ENCODE measurements at regions of chr15 and their contacts with region 1.

Region 1: GRCh38 chr15:42385206-42385979 is 26.1 kb downstream of the CAPN3 start:
- DNase-seq: peak; percentile 77
- ATAC-seq: peak; percentile 85
- H3K4me3 Mint-ChIP-seq: no peak overlapping the region
- H3K27ac Mint-ChIP-seq: no peak overlapping the region; the same call in 1 of the 2 replicates
- H3K4me1 Mint-ChIP-seq: peaks cover 29% of the 10 kb centered on the region
- H3K27me3 Mint-ChIP-seq: peaks cover 18% of the 10 kb centered on the region
- CTCF ChIP-seq: peak; percentile 51; the same call in 1 of the 2 replicates

Region 2: GRCh38 chr15:41989259-41989933 is 396.0 kb before region 1 on chr15:
- CTCF ChIA-PET with region 1: interaction called, 10 read pairs
- POLR2A ChIA-PET with region 1: no interaction called
- DNase-seq: peak; percentile 98
- ATAC-seq: peak; percentile 95
- H3K4me3 Mint-ChIP-seq: no peak overlapping the region
- H3K27ac Mint-ChIP-seq: no peak overlapping the region
- H3K4me1 Mint-ChIP-seq: peaks cover 6% of the 10 kb centered on the region
- H3K27me3 Mint-ChIP-seq: no peaks in the 10 kb centered on the region
- CTCF ChIP-seq: peak; percentile 97

Region 3: GRCh38 chr15:42156243-42156922 is 229.0 kb before region 1 on chr15 and contains the start of gene PLA2G4F:
- CTCF ChIA-PET with region 1: interaction called, 14 read pairs
- POLR2A ChIA-PET with region 1: no interaction called
- DNase-seq: no peak
- ATAC-seq: peak; percentile 58
- H3K4me3 Mint-ChIP-seq: no peak within 1 kb of the TSS
- H3K27ac Mint-ChIP-seq: peak within 1 kb of the TSS; percentile 46; the same call in 1 of the 2 replicates
- H3K4me1 Mint-ChIP-seq: peaks cover 7% of the 10 kb centered on the region
- H3K27me3 Mint-ChIP-seq: no peaks in the 10 kb centered on the region
- CTCF ChIP-seq: no peak
- total RNA-seq, gene PLA2G4F: 0.11 to 0.18 TPM (median 0.16 TPM) in 3 replicates

Region 4: DNA sequence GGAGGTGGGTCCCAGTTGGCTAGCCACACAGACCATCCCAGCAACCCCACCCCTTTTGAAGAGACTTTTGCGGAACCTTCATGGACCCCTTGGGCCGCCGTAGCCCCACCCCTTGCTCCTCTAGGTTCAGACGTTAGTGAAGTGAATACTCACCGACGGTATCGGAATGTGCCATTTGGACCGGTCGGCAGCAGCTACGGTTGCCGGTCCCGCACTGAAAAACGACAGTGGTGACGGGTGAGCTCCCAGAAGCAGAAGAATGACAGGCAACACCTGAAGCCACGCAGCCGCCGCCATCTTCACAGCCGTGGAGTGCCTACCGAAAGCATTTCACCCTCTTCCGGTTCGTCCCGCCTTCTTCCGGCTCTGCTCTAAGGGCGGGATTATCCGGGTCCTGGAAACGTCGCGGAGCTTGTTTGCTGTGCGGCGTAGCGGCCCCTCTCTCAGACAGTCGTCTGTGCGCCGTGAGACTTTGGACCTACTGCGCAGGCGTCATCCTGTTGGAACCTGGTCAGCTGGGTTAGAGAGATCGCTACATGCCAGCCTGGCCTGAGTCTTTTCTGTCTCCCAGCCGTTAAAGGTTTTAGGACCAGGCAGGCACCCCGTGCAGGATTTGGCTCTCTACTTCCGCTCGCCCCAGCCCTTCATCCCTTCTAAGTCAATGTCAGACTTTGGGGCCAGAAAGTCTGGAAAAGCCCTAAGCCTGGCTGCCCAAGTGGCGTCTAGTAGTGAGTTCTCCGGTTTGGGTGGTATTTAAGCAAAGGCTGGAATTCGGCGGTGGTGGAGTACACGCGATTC is 112.1 kb before region 1 on chr15 and contains the starts of genes GANC and TMEM87A:
- CTCF ChIA-PET with region 1: interaction called, 13 read pairs
- POLR2A ChIA-PET with region 1: interaction called, 7 read pairs
- DNase-seq: peak; percentile 96
- ATAC-seq: peak; percentile 96
- H3K4me3 Mint-ChIP-seq: peak within 1 kb of the TSS; percentile 97
- H3K27ac Mint-ChIP-seq: peak within 1 kb of the TSS; percentile 100
- H3K4me1 Mint-ChIP-seq: peaks cover 32% of the 10 kb centered on the region
- H3K27me3 Mint-ChIP-seq: no peaks in the 10 kb centered on the region
- CTCF ChIP-seq: no peak
- total RNA-seq, gene GANC: 18.5 to 20.5 TPM (median 19.6 TPM) in 3 replicates
- total RNA-seq, gene TMEM87A: 28.6 to 32.4 TPM (median 30.5 TPM) in 3 replicates

Region 5: GRCh38 chr15:42338500-42338899 is 46.9 kb before region 1 on chr15:
- CTCF ChIA-PET with region 1: interaction called, 10 read pairs
- POLR2A ChIA-PET with region 1: no interaction called
- DNase-seq: no peak
- ATAC-seq: no peak
- H3K4me3 Mint-ChIP-seq: no peak overlapping the region
- H3K27ac Mint-ChIP-seq: peak overlapping the region; percentile 86
- H3K4me1 Mint-ChIP-seq: no peaks in the 10 kb centered on the region
- H3K27me3 Mint-ChIP-seq: no peaks in the 10 kb centered on the region
- CTCF ChIP-seq: no peak

Region 6: DNA sequence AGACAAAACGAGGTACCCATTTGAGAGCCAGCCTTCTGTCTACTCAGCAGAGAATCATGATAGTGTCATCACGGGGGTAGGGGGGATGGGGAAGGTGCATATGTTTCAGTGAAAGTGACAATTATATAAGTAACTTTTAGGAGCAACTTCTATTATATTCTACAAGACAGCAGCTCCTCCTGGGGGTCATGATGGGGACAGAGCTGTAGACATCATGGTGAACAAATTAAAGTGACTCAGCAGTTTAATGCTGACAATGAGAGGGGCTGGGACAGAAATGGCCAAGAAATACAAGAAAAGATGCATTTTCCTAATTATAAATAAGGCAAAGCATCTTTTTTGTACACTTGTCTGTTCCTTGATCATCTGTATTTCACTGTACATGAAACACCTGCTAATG is 14.3 kb before region 1 on chr15:
- CTCF ChIA-PET with region 1: interaction called, 11 read pairs
- POLR2A ChIA-PET with region 1: no interaction called
- DNase-seq: no peak
- ATAC-seq: no peak
- H3K4me3 Mint-ChIP-seq: no peak overlapping the region
- H3K27ac Mint-ChIP-seq: no peak overlapping the region
- H3K4me1 Mint-ChIP-seq: no peaks in the 10 kb centered on the region
- H3K27me3 Mint-ChIP-seq: peaks cover 49% of the 10 kb centered on the region
- CTCF ChIP-seq: no peak

Region 7: GRCh38 chr15:42408178-42408577 is 22.8 kb after region 1 on chr15:
- CTCF ChIA-PET with region 1: interaction called, 11 read pairs
- POLR2A ChIA-PET with region 1: no interaction called
- DNase-seq: no peak
- ATAC-seq: no peak
- H3K4me3 Mint-ChIP-seq: no peak overlapping the region
- H3K27ac Mint-ChIP-seq: no peak overlapping the region
- H3K4me1 Mint-ChIP-seq: no peaks in the 10 kb centered on the region
- H3K27me3 Mint-ChIP-seq: no peaks in the 10 kb centered on the region
- CTCF ChIP-seq: no peak

Region 8: GRCh38 chr15:42511010-42511396 is 125.6 kb after region 1 on chr15:
- CTCF ChIA-PET with region 1: no interaction called
- POLR2A ChIA-PET with region 1: no interaction called
- DNase-seq: no peak
- ATAC-seq: no peak
- H3K4me3 Mint-ChIP-seq: no peak overlapping the region
- H3K27ac Mint-ChIP-seq: no peak overlapping the region
- H3K4me1 Mint-ChIP-seq: no peaks in the 10 kb centered on the region
- H3K27me3 Mint-ChIP-seq: no peaks in the 10 kb centered on the region
- CTCF ChIP-seq: no peak